Adrenal gland (tissue), 19 donors: ENCODE measurements at regions of chr3 and their contacts with region 1.

Region 1: GRCh38 chr3:42101048-42101447 is 9.9 kb downstream of the TRAK1 start:
- DNase-seq: peak in 6 of 7 donors; percentile 38 to 76 (median 62)
- H3K4me3 ChIP-seq: no peak overlapping the region
- H3K27ac ChIP-seq: peak overlapping the region in 3 of 5 donors; percentile 1 to 43 (median 3)
- H3K4me1 ChIP-seq: peaks cover 11 to 40% of the 10 kb centered on the region in 2 donors
- H3K27me3 ChIP-seq: no peaks in the 10 kb centered on the region
- CTCF ChIP-seq: no peak
- POLR2A ChIP-seq: no peak

Region 2: DNA sequence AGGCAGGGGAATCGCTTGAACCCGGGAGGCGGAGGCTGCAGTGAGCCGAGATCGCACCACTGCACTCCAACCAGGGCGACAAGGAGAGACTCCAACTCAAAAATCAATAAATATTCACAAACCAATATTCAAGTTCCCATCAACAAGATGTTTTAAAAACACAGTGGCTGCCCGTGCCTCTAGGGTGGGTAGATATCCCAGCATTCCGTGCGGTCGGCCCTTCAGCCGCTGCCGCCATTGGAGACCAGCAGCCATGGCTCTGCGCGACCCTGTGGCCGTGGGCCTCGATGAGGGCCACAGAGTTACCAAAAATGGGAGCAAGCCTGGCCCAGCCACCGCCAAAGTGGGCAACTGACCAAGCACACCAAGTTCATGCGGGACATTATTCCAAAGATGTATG is 145.9 kb before region 1 on chr3:
- intact Hi-C with region 1: loop called in 1 of 2 experiments (anchors 5 kb)
- DNase-seq: no peak
- H3K4me3 ChIP-seq: no peak overlapping the region
- H3K27ac ChIP-seq: no peak overlapping the region
- H3K4me1 ChIP-seq: no peaks in the 10 kb centered on the region
- H3K27me3 ChIP-seq: no peaks in the 10 kb centered on the region
- CTCF ChIP-seq: no peak
- POLR2A ChIP-seq: no peak

Region 3: DNA sequence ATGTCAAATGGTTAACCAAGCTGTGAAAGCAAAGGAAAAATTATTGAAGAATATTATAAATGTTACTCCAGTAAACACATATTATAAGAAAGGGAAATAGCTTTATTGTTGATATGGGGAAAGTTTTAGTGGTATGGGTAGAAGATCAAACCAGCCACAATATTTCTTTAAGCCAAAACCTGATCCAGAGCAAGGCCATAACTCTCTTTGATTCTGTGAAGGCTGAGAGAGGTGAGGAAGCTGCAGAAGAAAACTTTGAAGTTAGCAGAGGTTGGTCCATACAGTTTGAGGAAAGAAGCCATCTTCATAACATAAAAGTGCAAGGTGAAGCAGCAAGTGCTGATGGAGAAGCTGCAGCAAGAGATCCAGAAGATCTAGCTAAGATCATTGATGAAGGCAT is 254.6 kb after region 1 on chr3:
- intact Hi-C with region 1: no loop called
- DNase-seq: no peak
- H3K4me3 ChIP-seq: no peak overlapping the region
- H3K27ac ChIP-seq: no peak overlapping the region
- H3K4me1 ChIP-seq: no peaks in the 10 kb centered on the region
- H3K27me3 ChIP-seq: no peaks in the 10 kb centered on the region
- CTCF ChIP-seq: no peak
- POLR2A ChIP-seq: no peak